Tibial artery (tissue), 4 donors: ENCODE measurements at regions of chr12 and their contacts with region 1.

Region 1: DNA sequence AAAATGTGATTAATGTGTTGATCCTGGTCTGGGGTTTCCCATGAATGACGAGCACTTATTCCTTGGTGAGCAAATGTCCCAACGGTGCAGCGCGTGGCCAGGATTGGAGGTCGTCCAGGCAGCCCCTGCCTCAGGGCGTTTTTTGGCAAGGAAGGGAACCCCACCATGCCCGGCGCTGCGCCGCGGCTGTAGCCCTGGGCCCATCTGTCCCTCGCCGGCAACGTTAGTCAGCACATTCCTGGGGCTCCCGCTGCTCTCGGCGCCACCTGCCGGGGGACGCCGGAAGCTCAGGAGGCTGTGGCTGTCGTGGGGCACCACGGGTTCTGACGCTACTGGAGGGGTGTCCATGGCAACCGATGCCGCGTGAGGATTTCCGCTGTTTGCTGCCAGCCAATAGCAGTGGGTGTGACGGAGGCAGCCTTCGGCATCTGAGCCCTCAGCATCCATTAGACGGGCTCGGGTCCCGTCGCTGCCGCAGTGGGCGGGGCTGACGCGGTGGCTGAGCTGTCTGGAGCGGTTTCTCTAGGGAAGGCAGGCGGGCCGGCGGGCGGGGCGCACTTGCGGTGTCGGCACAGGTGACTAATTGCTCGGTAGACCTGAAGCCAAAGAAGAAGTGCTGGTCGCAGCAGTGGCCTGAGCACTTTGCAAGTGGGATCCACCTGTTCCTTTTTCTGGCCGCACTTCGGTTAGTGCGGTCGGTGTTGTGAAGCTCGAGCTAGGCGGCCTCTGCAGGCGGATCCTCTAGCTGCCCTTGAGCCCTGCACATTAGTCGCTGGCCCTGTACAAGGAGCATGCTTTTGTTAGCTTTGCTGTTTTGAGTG is 29.5 kb downstream of the RAB35 start:
- DNase-seq: peak; percentile 99 to 100
- H3K4me3 ChIP-seq: peak overlapping the region; percentile 40 to 57
- H3K27ac ChIP-seq: peak overlapping the region; percentile 65 to 66
- H3K4me1 ChIP-seq: peaks cover 0 to 9% (median 4%) of the 10 kb centered on the region in 4 donors
- H3K27me3 ChIP-seq: no peaks in the 10 kb centered on the region
- CTCF ChIP-seq: peak; percentile 98 to 99

Region 2: DNA sequence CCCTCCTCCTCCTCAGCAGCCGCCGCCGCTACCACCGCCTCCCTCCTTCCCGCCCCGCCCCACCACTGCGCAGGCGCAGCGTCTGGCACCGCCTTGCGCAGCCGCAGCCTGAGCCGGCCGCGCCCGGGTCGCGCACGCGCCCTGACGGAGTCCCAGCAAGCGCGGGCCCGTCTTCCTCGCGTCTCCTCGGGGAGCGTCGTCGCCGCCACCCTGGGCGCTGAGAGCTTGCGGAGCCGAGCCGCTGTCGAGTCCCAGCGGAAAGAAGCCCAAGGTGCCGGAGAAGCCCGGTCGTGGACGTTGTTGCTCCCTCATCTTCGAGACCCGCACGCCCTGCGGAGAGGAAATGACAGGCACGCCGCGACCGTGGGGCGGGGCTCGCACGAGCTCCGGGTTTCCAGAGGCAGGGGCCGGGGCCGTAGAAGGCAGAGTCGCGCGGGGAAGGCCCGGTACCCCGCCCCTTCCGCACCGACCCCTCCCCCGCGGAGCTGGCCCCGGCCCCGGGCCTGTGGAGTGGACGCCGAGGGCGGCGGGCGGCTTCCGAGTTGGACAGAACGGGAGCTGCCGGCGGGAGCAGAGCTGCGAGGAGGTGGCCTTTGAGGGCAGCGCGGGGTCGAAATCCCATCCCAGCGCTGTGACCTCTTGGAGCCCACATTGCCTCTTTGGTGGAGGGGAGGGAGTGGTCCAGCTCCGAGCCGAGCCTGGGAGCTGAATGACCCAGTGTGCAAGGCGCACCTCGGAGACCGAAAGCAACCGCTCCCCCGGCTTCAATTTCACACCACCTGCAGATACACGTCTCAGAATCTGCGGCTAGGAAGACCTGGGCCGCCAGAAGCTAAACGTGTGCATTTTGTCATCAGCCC is 30.0 kb after region 1 on chr12:
- intact Hi-C with region 1: loop called (anchors 2 kb)
- DNase-seq: peak; percentile 92 to 97
- H3K4me3 ChIP-seq: peak overlapping the region; percentile 71 to 87
- H3K27ac ChIP-seq: peak overlapping the region; percentile 85 to 93
- H3K4me1 ChIP-seq: peaks cover 0 to 45% (median 25%) of the 10 kb centered on the region in 4 donors
- H3K27me3 ChIP-seq: no peaks in the 10 kb centered on the region
- CTCF ChIP-seq: no peak

Region 3: DNA sequence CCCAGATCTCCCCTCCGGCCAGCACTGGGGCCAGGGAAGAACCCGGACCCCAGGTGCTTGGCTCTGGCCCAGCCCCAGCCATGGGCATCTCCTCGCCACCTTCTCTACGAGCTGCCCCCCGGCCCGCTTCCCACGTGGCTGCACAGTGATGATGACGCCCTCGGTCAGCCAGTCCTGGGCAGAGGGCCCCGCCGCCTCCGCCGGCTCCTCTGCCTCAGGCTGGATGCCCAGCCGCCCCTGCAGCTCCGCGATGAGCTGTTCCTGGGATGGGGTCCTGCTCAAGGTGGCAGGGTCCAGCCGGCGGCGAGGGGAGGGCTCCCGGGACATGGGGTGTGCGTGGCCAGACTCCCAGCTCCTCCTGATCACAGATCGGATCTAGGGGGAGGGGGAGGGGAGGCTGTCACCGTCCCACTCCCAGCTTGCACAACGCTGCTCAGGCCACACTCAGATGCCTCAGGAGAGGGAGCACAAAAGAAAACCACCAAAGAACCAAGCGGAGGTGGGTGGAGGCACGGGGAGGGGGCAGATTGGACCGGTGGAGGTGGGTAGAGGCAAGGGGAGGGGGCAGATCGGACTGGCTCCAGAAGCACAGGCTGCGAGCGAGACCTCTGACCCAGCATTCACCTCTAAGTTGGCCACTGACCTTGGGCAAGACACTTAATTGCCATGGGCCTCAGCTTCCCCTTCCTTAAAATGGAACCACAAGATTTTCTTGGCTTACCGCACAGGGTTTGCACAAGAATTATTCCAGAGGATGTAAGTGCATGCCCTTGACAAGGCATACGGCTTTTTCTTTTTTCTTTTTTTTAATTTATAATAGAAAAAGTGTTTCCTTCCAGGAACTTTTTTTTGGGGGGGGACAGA is 130.0 kb after region 1 on chr12:
- intact Hi-C with region 1: no loop called
- DNase-seq: no peak
- H3K4me3 ChIP-seq: no peak overlapping the region
- H3K27ac ChIP-seq: no peak overlapping the region
- H3K4me1 ChIP-seq: no peaks in the 10 kb centered on the region
- H3K27me3 ChIP-seq: no peaks in the 10 kb centered on the region
- CTCF ChIP-seq: no peak